ENCODE measurements at regions of chr10 and their contacts with region 1.

Region 1: GRCh38 chr10:72834183-72834825 is 59.2 kb upstream of the OIT3 start:
- DNase-seq: peak; percentile 98
- ATAC-seq: peak; percentile 86
- H3K4me3 ChIP-seq: peak overlapping the region; percentile 1; the same call in 1 of the 2 replicates
- H3K27ac ChIP-seq: no peak overlapping the region
- H3K4me1 ChIP-seq: no peaks in the 10 kb centered on the region
- H3K27me3 ChIP-seq: peaks cover 31% of the 10 kb centered on the region
- CTCF ChIP-seq: peak; percentile 100

Region 2: GRCh38 chr10:72625608-72626443 is 208.5 kb before region 1 on chr10 and contains the start of gene MICU1:
- CTCF ChIA-PET with region 1: no interaction called
- POLR2A ChIA-PET with region 1: no interaction called
- intact Hi-C with region 1: loop called (anchors 10 kb)
- DNase-seq: peak; percentile 94
- ATAC-seq: peak; percentile 96
- H3K4me3 ChIP-seq: peak within 1 kb of the TSS; percentile 87
- H3K27ac ChIP-seq: peak within 1 kb of the TSS; percentile 24
- H3K4me1 ChIP-seq: peaks cover 9% of the 10 kb centered on the region; the same call in 1 of the 2 replicates
- H3K27me3 ChIP-seq: no peaks in the 10 kb centered on the region
- CTCF ChIP-seq: no peak
- total RNA-seq, gene MICU1: 19.8 and 24.9 TPM in 2 replicates

Region 3: DNA sequence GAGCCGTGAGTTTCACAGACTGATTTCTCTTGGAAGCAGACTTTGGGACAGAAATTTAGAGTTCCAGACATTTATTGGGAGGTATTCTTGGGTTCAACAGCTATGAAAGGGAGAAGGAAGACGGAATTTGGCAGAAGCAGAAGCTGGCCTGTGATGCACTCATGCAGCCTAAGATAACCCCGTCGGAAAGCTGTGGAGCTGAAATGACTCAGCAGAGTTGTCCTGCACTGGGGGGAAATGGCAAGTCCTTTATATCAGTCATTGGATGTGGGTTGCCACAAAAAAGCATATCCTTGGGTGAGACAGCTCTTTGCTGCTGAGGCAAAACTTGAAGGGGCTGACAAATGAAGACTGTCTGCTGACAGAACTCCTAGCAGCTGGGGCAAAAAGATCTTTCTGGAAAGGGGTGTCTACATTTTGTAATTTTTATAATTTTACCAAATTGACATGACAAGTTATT is 196.9 kb before region 1 on chr10:
- CTCF ChIA-PET with region 1: no interaction called
- POLR2A ChIA-PET with region 1: no interaction called
- intact Hi-C with region 1: no loop called
- DNase-seq: no peak
- ATAC-seq: no peak
- H3K4me3 ChIP-seq: no peak overlapping the region
- H3K27ac ChIP-seq: no peak overlapping the region
- H3K4me1 ChIP-seq: peaks cover 7% of the 10 kb centered on the region; the same call in 1 of the 2 replicates
- H3K27me3 ChIP-seq: no peaks in the 10 kb centered on the region
- CTCF ChIP-seq: no peak

Region 4: GRCh38 chr10:72846225-72846624 is 11.9 kb after region 1 on chr10:
- CTCF ChIA-PET with region 1: interaction called, 20 read pairs
- POLR2A ChIA-PET with region 1: interaction called, 3 read pairs
- intact Hi-C with region 1: no loop called
- DNase-seq: peak; percentile 100
- ATAC-seq: peak; percentile 99
- H3K4me3 ChIP-seq: no peak overlapping the region
- H3K27ac ChIP-seq: peak overlapping the region; percentile 8; the same call in 1 of the 2 replicates
- H3K4me1 ChIP-seq: peaks cover 25% of the 10 kb centered on the region
- H3K27me3 ChIP-seq: no peaks in the 10 kb centered on the region
- CTCF ChIP-seq: no peak

Region 5: GRCh38 chr10:73060738-73061635 is 226.7 kb after region 1 on chr10:
- CTCF ChIA-PET with region 1: interaction called, 11 read pairs
- POLR2A ChIA-PET with region 1: no interaction called
- intact Hi-C with region 1: loop called (anchors 1 kb)
- DNase-seq: peak; percentile 98
- ATAC-seq: peak; percentile 95
- H3K4me3 ChIP-seq: no peak overlapping the region
- H3K27ac ChIP-seq: no peak overlapping the region
- H3K4me1 ChIP-seq: no peaks in the 10 kb centered on the region
- H3K27me3 ChIP-seq: no peaks in the 10 kb centered on the region
- CTCF ChIP-seq: peak; percentile 100

Region 6: DNA sequence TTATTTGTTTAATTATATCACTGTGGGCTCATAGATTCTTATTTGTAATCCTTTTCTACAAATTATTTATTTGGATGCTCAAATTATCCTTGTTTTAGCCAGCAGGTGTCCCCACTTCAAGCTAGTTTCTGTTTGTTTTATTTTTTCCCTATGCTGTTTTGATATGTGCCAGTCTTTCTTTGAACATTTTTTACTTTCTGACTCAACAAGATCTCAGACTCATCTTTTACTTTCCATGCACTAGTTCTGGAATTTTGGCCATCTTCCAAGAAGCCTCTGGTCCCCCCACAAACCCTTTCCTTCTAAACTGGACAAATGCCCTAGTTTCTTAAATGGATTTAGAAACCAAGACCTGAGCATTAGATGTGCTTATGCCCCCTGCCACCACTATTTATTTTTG is 429.6 kb after region 1 on chr10:
- CTCF ChIA-PET with region 1: interaction called, 31 read pairs
- POLR2A ChIA-PET with region 1: no interaction called
- intact Hi-C with region 1: loop called (anchors 1 kb)
- DNase-seq: peak; percentile 90
- ATAC-seq: peak; percentile 37
- H3K4me3 ChIP-seq: no peak overlapping the region
- H3K27ac ChIP-seq: no peak overlapping the region
- H3K4me1 ChIP-seq: peaks cover 20% of the 10 kb centered on the region
- H3K27me3 ChIP-seq: no peaks in the 10 kb centered on the region; the same call in 1 of the 2 replicates
- CTCF ChIP-seq: peak; percentile 99

Measured in PC-3 (cell line).